Left ventricle myocardium superior (tissue), 1 donor: ENCODE measurements at regions of chr2 and their contacts with region 1.

Region 1: DNA sequence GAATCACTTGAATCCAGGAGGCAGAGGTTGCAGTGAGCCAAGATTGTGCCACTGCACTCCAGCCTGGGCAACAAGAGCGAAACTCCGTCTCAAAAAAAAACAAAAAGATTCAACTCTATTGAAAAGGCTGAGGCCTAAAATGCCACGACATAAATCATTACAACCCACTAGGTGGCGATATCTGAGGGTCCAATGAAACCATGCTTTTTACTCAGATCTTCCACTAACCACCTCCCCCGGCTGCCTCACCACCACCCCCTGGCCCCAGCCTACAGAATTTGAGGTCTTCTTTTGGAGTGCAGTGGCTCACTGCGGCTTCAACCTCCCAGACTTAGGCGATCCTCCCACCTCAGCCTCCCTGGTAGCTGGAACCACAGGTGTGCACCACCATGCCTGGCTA is 57.5 kb downstream of the AP1S3 start:
- DNase-seq: no peak
- ATAC-seq: no peak

Region 2: GRCh38 chr2:223365158-223365679 is 414.7 kb before region 1 on chr2:
- intact Hi-C with region 1: loop called (anchors 10 kb)
- DNase-seq: no peak
- ATAC-seq: no peak